ENCODE measurements at regions of chr3 and their contacts with region 1.

Region 1: DNA sequence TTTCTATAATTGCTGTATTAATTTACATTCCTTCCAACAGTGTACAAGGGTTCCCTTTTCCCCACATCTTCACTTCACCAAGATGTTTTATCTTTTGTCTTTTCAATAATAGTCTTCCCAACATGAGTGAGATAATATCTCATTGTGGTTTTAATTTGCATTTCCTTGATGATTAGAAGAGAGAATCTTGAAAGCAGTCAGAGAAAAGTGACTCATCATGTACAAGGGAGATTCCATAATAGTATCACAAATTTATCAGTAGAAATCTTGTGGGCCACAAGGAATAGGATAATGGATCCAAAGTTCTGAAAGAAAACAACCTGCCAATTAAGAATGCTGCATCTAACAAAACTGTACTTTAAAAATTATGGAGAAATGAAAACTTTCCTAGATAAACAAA is 189.3 kb downstream of the NECTIN3 start:
- DNase-seq: no peak
- H3K4me3 Mint-ChIP-seq: peak overlapping the region; percentile 5
- H3K27ac Mint-ChIP-seq: peak overlapping the region; percentile 51
- H3K4me1 Mint-ChIP-seq: peaks cover 28% of the 10 kb centered on the region
- H3K27me3 Mint-ChIP-seq: peaks cover 7% of the 10 kb centered on the region

Region 2: GRCh38 chr3:109806929-109807328 is 1453.9 kb before region 1 on chr3:
- intact Hi-C with region 1: loop called (anchors 2 kb)
- DNase-seq: peak; percentile 30
- H3K4me3 Mint-ChIP-seq: peak overlapping the region; percentile 35
- H3K27ac Mint-ChIP-seq: peak overlapping the region; percentile 67
- H3K4me1 Mint-ChIP-seq: peaks cover 39% of the 10 kb centered on the region
- H3K27me3 Mint-ChIP-seq: peaks cover 8% of the 10 kb centered on the region

Region 3: DNA sequence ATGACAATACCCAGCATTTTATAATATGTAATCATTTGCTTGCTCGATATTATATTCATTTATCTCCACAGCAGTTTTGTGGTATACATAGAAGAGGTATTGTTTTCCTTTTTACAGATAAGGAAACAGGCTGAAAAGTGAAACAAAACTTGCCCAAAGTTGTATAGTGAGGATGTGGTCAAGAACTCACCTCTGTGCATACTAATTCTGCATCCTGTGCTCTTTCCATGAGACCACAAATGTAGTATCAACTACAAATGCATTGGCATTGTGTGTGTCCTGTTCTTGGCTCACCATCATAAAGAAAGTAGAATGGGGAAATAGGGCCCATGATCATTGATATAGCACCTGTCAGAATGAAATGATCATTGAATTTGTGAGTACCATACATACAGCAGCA is 22.0 kb before region 1 on chr3:
- intact Hi-C with region 1: loop called (anchors 1 kb)
- DNase-seq: peak; percentile 48
- H3K4me3 Mint-ChIP-seq: peak overlapping the region; percentile 69
- H3K27ac Mint-ChIP-seq: peak overlapping the region; percentile 76
- H3K4me1 Mint-ChIP-seq: peaks cover 49% of the 10 kb centered on the region
- H3K27me3 Mint-ChIP-seq: no peaks in the 10 kb centered on the region

Region 4: DNA sequence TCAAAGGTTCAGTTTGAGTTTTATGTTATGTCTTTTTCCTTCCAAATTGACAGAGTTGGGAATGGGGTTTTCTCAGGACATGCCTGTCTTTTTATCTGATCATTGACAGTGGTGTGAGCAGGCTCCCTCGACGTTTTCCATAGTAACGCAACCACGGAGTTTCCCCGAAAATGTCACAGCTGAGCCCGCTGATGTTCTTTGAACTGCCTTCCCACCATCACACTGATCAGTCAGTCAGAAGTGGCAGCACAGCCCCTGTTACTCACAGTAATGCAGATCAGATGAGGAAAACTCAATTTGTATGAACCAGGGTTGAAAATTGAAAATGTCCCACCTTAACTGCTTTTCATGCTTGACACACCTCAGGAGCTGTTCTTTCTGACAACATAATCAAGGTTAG is 21.1 kb after region 1 on chr3:
- intact Hi-C with region 1: loop called (anchors 2 kb)
- DNase-seq: peak; percentile 20
- H3K4me3 Mint-ChIP-seq: peak overlapping the region; percentile 27
- H3K27ac Mint-ChIP-seq: peak overlapping the region; percentile 11
- H3K4me1 Mint-ChIP-seq: peaks cover 55% of the 10 kb centered on the region
- H3K27me3 Mint-ChIP-seq: no peaks in the 10 kb centered on the region

Region 5: GRCh38 chr3:111311709-111312235 is 50.9 kb after region 1 on chr3:
- intact Hi-C with region 1: loop called (anchors 1 kb)
- DNase-seq: no peak
- H3K4me3 Mint-ChIP-seq: peak overlapping the region; percentile 45
- H3K27ac Mint-ChIP-seq: peak overlapping the region; percentile 92
- H3K4me1 Mint-ChIP-seq: no peaks in the 10 kb centered on the region
- H3K27me3 Mint-ChIP-seq: no peaks in the 10 kb centered on the region

Region 6: DNA sequence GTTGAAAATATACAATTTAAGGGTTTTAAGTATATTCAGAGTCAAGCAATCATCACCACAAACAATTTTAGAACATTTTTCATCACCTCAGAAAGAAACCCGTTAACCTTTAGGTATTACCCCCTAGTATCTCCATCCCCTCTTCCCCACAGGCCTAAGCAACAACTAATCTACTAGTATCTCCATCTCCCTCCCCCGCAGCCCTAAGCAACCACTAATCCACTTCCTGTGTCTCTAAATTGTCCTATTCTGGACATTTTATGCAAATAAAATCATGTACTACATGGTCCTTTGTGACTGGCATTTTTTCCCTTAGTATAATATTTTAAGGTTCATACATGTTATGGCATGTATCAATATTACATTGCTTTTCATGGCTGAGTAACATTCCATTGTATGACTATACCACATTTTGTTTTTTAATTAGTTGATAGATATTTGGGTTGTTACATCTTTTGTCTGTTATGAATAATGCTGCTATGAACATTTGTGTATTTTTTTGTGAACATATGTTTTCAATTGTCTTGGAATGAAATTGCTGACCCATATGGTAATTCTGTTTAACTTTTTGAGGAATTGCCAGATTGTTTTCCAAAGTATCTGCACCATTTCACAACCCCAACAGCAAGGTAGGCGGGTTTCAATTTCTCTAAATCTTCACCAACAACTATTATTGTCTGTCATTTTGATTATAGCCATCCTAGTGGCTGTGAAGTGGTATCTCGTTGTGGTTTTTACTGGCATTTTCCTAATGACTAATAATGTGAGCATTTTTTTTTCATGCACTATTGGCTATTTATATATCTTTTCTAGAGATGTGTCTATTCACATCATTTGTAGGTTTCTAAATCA is 65.5 kb after region 1 on chr3:
- intact Hi-C with region 1: loop called (anchors 2 kb)
- DNase-seq: no peak
- H3K4me3 Mint-ChIP-seq: no peak overlapping the region
- H3K27ac Mint-ChIP-seq: peak overlapping the region; percentile 38
- H3K4me1 Mint-ChIP-seq: peaks cover 36% of the 10 kb centered on the region
- H3K27me3 Mint-ChIP-seq: no peaks in the 10 kb centered on the region

Region 7: DNA sequence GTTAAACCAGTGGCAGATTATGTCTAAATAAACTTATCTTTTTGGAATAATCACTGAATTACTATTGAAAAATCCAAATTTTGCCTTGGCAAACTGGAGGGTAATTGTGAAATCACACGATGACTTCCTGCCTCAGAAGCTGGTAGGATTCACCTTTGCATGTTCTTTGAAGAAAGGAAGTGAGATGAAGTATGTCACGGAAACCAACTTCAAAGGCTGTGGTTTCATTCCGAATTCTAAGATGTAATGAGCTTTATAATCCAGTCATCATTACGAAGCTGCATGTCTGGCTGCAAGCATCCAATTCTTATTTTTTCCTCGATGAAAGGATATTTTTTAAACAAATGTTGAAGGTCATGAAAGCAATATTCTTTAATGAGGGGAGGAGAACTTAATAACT is 349.3 kb after region 1 on chr3:
- intact Hi-C with region 1: loop called (anchors 5 kb)
- DNase-seq: peak; percentile 61
- H3K4me3 Mint-ChIP-seq: peak overlapping the region; percentile 69
- H3K27ac Mint-ChIP-seq: peak overlapping the region; percentile 98
- H3K4me1 Mint-ChIP-seq: peaks cover 98% of the 10 kb centered on the region
- H3K27me3 Mint-ChIP-seq: no peaks in the 10 kb centered on the region

Measured in activated T-helper 1 cell treated with anti-CD3 and anti-CD28 coated beads, Interleukin-12 subunit alpha, Interleukin-12 subunit beta, Interleukin-2, Interleukin-4 antibody, amounts not matched to agents 30 ng/mL and 10 ng/mL and 1 ng/mL, durations not matched to agents 14 hours and 24 hours and 36 hours (primary cell).